Activated CD4-positive, alpha-beta T cell treated with anti-CD3 and anti-CD28 coated beads for 36 hours (primary cell): ENCODE measurements at regions of chr2 and their contacts with region 1.

Region 1: DNA sequence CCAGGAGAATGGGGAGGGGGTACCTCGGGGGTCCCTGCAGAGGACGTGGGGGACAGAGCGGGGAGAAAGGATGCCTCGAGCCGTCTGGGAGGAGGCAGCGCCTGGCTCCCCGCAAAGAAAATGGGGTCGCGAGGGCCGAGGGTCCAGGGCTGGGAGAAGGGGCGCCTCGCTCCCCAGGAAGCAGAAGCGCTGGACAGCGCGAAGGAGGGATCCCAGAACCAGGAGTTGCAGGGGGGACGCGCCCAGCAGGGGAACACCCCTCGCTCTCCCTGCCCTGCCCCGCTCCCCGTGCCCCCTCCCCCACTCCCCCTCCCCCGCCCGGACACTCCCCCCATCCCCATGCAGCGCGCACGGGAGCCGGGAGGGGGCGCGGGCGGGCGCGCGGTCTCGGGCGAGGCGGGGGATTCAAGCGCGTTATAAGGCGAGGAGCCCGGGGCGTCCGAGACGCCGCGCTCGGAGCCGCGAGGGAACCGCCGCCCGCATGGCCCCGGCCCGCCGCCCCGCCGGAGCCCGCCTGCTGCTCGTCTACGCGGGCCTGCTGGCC is at the start of gene ERFE:
- DNase-seq: peak; percentile 77
- ATAC-seq: peak; percentile 88
- H3K4me3 Mint-ChIP-seq: peak within 1 kb of the TSS; percentile 61
- H3K27ac Mint-ChIP-seq: no peak within 1 kb of the TSS
- H3K4me1 Mint-ChIP-seq: peaks cover 5% of the 10 kb centered on the region
- H3K27me3 Mint-ChIP-seq: peaks cover 13% of the 10 kb centered on the region
- total RNA-seq, gene ERFE: 0.07 to 0.39 TPM

Region 2: GRCh38 chr2:237315170-237315828 is 843.3 kb before region 1 on chr2:
- CTCF ChIA-PET with region 1: no interaction called
- POLR2A ChIA-PET with region 1: no interaction called
- intact Hi-C with region 1: no loop called
- DNase-seq: no peak
- ATAC-seq: no peak
- H3K4me3 Mint-ChIP-seq: no peak overlapping the region
- H3K27ac Mint-ChIP-seq: no peak overlapping the region
- H3K4me1 Mint-ChIP-seq: no peaks in the 10 kb centered on the region
- H3K27me3 Mint-ChIP-seq: peaks cover 3% of the 10 kb centered on the region

Region 3: GRCh38 chr2:238263204-238264071 is 104.8 kb after region 1 on chr2:
- CTCF ChIA-PET with region 1: interaction called, 6 read pairs
- POLR2A ChIA-PET with region 1: no interaction called
- intact Hi-C with region 1: loop called (anchors 1 to 10 kb)
- DNase-seq: peak; percentile 88
- ATAC-seq: peak; percentile 87
- H3K4me3 Mint-ChIP-seq: no peak overlapping the region
- H3K27ac Mint-ChIP-seq: peak overlapping the region; percentile 63
- H3K4me1 Mint-ChIP-seq: peaks cover 3% of the 10 kb centered on the region
- H3K27me3 Mint-ChIP-seq: no peaks in the 10 kb centered on the region

Region 4: GRCh38 chr2:238339395-238340213 is 181.0 kb after region 1 on chr2:
- CTCF ChIA-PET with region 1: no interaction called
- POLR2A ChIA-PET with region 1: no interaction called
- intact Hi-C with region 1: no loop called
- DNase-seq: peak; percentile 16
- ATAC-seq: no peak
- H3K4me3 Mint-ChIP-seq: no peak overlapping the region
- H3K27ac Mint-ChIP-seq: no peak overlapping the region
- H3K4me1 Mint-ChIP-seq: peaks cover 2% of the 10 kb centered on the region
- H3K27me3 Mint-ChIP-seq: no peaks in the 10 kb centered on the region